WTC11 (cell line): ENCODE measurements at regions of chr17 and their contacts with region 1.

Region 1: GRCh38 chr17:72985881-72986720 is 106.4 kb downstream of the SLC39A11 start:
- DNase-seq: peak; percentile 78
- ATAC-seq: peak; percentile 97
- H3K4me3 Mint-ChIP-seq: no peak overlapping the region
- H3K27ac Mint-ChIP-seq: no peak overlapping the region
- H3K4me1 Mint-ChIP-seq: peaks cover 5% of the 10 kb centered on the region; the same call in 1 of the 2 replicates
- H3K27me3 Mint-ChIP-seq: no peaks in the 10 kb centered on the region
- CTCF ChIP-seq: peak; percentile 85

Region 2: GRCh38 chr17:72839131-72839725 is 146.9 kb before region 1 on chr17:
- CTCF ChIA-PET with region 1: no interaction called
- POLR2A ChIA-PET with region 1: no interaction called
- DNase-seq: no peak
- ATAC-seq: no peak
- H3K4me3 Mint-ChIP-seq: no peak overlapping the region
- H3K27ac Mint-ChIP-seq: no peak overlapping the region
- H3K4me1 Mint-ChIP-seq: no peaks in the 10 kb centered on the region
- H3K27me3 Mint-ChIP-seq: no peaks in the 10 kb centered on the region; the same call in 1 of the 2 replicates
- CTCF ChIP-seq: no peak

Region 3: DNA sequence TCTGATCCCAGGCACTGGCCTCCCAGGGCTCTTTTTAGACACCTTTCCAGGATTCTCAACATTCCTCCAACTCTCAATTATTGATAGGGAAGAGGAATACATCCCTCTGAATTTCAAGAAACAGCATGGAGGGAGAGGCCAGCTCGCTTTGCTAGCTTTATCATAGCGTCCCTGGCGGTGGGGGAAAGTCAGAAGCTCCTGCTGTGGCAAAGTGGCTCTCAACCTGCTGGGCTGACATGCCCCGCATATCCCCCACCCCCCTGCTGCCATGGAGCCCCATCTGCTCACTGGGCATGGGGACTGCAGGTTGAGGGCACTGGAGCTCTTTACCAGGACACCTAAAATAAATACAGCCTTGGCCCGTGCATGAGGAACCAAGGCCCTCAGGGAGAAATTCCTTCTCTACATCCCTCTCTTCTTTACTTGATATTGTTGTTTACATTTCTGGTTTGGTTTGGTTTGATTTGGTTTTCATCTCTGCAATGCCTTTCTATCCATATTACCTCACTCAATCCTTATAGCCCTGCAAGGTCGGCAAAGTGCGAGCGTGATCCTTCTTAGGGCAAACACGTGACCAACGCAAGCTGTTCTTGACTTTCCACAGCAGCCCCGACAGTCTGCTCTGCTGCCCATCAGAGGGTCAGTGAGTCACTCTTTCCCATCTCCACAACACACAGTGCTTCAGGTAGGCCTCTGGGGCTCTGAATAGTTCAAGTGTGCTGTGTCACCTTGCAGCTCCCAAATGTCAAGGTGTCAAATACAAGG is 33.7 kb before region 1 on chr17:
- CTCF ChIA-PET with region 1: interaction called, 15 read pairs
- POLR2A ChIA-PET with region 1: interaction called, 4 read pairs
- DNase-seq: peak; percentile 21
- ATAC-seq: peak; percentile 73
- H3K4me3 Mint-ChIP-seq: no peak overlapping the region
- H3K27ac Mint-ChIP-seq: peak overlapping the region; percentile 37
- H3K4me1 Mint-ChIP-seq: peaks cover 31% of the 10 kb centered on the region
- H3K27me3 Mint-ChIP-seq: no peaks in the 10 kb centered on the region
- CTCF ChIP-seq: no peak

Region 4: GRCh38 chr17:73000832-73001231 is 14.7 kb after region 1 on chr17:
- CTCF ChIA-PET with region 1: interaction called, 10 read pairs
- POLR2A ChIA-PET with region 1: no interaction called
- DNase-seq: no peak
- ATAC-seq: no peak
- H3K4me3 Mint-ChIP-seq: no peak overlapping the region
- H3K27ac Mint-ChIP-seq: no peak overlapping the region
- H3K4me1 Mint-ChIP-seq: no peaks in the 10 kb centered on the region
- H3K27me3 Mint-ChIP-seq: no peaks in the 10 kb centered on the region
- CTCF ChIP-seq: no peak

Region 5: GRCh38 chr17:73156166-73156840 is 170.2 kb after region 1 on chr17:
- CTCF ChIA-PET with region 1: interaction called, 82 read pairs
- POLR2A ChIA-PET with region 1: no interaction called
- DNase-seq: peak; percentile 85
- ATAC-seq: peak; percentile 95
- H3K4me3 Mint-ChIP-seq: no peak overlapping the region
- H3K27ac Mint-ChIP-seq: no peak overlapping the region
- H3K4me1 Mint-ChIP-seq: peaks cover 40% of the 10 kb centered on the region
- H3K27me3 Mint-ChIP-seq: no peaks in the 10 kb centered on the region
- CTCF ChIP-seq: peak; percentile 58

Region 6: GRCh38 chr17:73165616-73166404 is 179.7 kb after region 1 on chr17:
- CTCF ChIA-PET with region 1: interaction called, 32 read pairs
- POLR2A ChIA-PET with region 1: interaction called, 4 read pairs
- DNase-seq: peak; percentile 38
- ATAC-seq: peak; percentile 2; the same call in 1 of the 2 replicates
- H3K4me3 Mint-ChIP-seq: peak overlapping the region; percentile 85
- H3K27ac Mint-ChIP-seq: no peak overlapping the region
- H3K4me1 Mint-ChIP-seq: peaks cover 50% of the 10 kb centered on the region
- H3K27me3 Mint-ChIP-seq: peaks cover 74% of the 10 kb centered on the region
- CTCF ChIP-seq: no peak

Region 7: GRCh38 chr17:73172252-73172651 is 186.2 kb after region 1 on chr17:
- CTCF ChIA-PET with region 1: interaction called, 10 read pairs
- POLR2A ChIA-PET with region 1: no interaction called
- DNase-seq: no peak
- ATAC-seq: peak; percentile 54
- H3K4me3 Mint-ChIP-seq: no peak overlapping the region
- H3K27ac Mint-ChIP-seq: no peak overlapping the region
- H3K4me1 Mint-ChIP-seq: peaks cover 39% of the 10 kb centered on the region
- H3K27me3 Mint-ChIP-seq: peaks cover 19% of the 10 kb centered on the region
- CTCF ChIP-seq: no peak

Region 8: GRCh38 chr17:73192894-73193701 is 207.0 kb after region 1 on chr17 and contains the start of gene COG1:
- CTCF ChIA-PET with region 1: interaction called, 44 read pairs
- POLR2A ChIA-PET with region 1: interaction called, 6 read pairs
- DNase-seq: peak; percentile 82
- ATAC-seq: peak; percentile 65
- H3K4me3 Mint-ChIP-seq: peak within 1 kb of the TSS; percentile 96
- H3K27ac Mint-ChIP-seq: peak within 1 kb of the TSS; percentile 97
- H3K4me1 Mint-ChIP-seq: peaks cover 21% of the 10 kb centered on the region
- H3K27me3 Mint-ChIP-seq: no peaks in the 10 kb centered on the region
- CTCF ChIP-seq: no peak
- total RNA-seq, gene COG1: 19.2 to 22.6 TPM (median 19.5 TPM) in 3 replicates

Region 9: DNA sequence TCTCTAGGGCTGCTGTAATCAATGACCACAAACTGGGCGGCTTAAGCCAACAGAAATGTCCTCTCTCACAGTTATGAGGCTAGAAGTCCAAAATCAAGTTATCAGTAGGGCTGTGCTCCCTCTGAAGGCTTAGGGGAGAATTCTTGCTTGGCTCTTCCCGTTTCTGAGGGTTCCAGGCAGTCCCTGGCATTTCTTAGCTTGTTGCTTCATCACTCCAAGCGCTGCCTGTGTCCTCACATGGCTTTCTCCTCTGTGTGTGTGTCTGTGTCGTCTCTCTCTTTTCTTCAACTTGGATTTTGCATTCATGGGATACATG is 339.4 kb after region 1 on chr17:
- CTCF ChIA-PET with region 1: no interaction called
- POLR2A ChIA-PET with region 1: no interaction called
- DNase-seq: no peak
- ATAC-seq: no peak; the same call in 1 of the 2 replicates
- H3K4me3 Mint-ChIP-seq: no peak overlapping the region
- H3K27ac Mint-ChIP-seq: 0 out of 2 replicates have a peak overlapping the region, but pooled peaks have one; percentile 34
- H3K4me1 Mint-ChIP-seq: peaks cover 32% of the 10 kb centered on the region
- H3K27me3 Mint-ChIP-seq: peaks cover 8% of the 10 kb centered on the region
- CTCF ChIP-seq: no peak